ENCODE measurements at regions of chr3 and their contacts with region 1.

Region 1: GRCh38 chr3:99810403-99810802 is 7.3 kb upstream of the CMSS1 start:
- DNase-seq: no peak
- H3K4me3 ChIP-seq: no peak overlapping the region
- H3K27ac ChIP-seq: no peak overlapping the region
- H3K4me1 ChIP-seq: no peaks in the 10 kb centered on the region
- H3K27me3 ChIP-seq: no peaks in the 10 kb centered on the region
- CTCF ChIP-seq: no peak
- EP300 ChIP-seq: no peak
- POLR2A ChIP-seq: no peak

Region 2: GRCh38 chr3:101387351-101387750 is 1576.9 kb after region 1 on chr3:
- intact Hi-C with region 1: loop called in 1 of 4 experiments (anchors 5 kb)
- DNase-seq: no peak
- H3K4me3 ChIP-seq: no peak overlapping the region
- H3K27ac ChIP-seq: no peak overlapping the region
- H3K4me1 ChIP-seq: peaks cover 6% of the 10 kb centered on the region
- H3K27me3 ChIP-seq: no peaks in the 10 kb centered on the region
- CTCF ChIP-seq: no peak
- EP300 ChIP-seq: no peak
- POLR2A ChIP-seq: no peak

Region 3: GRCh38 chr3:101518421-101518871 is 1708.0 kb after region 1 on chr3:
- intact Hi-C with region 1: no loop called
- DNase-seq: no peak
- H3K4me3 ChIP-seq: no peak overlapping the region
- H3K27ac ChIP-seq: no peak overlapping the region
- H3K4me1 ChIP-seq: peaks cover 2% of the 10 kb centered on the region
- H3K27me3 ChIP-seq: no peaks in the 10 kb centered on the region
- CTCF ChIP-seq: no peak
- EP300 ChIP-seq: no peak
- POLR2A ChIP-seq: no peak

Measured in ovary (tissue), 10 donors.